GM10248 (cell line): ENCODE measurements at regions of chr11 and their contacts with region 1.

Region 1: GRCh38 chr11:124793466-124794278 is 6.5 kb downstream of the MSANTD2 start:
- DNase-seq: peak; percentile 50
- CTCF ChIP-seq: peak; percentile 77

Region 2: DNA sequence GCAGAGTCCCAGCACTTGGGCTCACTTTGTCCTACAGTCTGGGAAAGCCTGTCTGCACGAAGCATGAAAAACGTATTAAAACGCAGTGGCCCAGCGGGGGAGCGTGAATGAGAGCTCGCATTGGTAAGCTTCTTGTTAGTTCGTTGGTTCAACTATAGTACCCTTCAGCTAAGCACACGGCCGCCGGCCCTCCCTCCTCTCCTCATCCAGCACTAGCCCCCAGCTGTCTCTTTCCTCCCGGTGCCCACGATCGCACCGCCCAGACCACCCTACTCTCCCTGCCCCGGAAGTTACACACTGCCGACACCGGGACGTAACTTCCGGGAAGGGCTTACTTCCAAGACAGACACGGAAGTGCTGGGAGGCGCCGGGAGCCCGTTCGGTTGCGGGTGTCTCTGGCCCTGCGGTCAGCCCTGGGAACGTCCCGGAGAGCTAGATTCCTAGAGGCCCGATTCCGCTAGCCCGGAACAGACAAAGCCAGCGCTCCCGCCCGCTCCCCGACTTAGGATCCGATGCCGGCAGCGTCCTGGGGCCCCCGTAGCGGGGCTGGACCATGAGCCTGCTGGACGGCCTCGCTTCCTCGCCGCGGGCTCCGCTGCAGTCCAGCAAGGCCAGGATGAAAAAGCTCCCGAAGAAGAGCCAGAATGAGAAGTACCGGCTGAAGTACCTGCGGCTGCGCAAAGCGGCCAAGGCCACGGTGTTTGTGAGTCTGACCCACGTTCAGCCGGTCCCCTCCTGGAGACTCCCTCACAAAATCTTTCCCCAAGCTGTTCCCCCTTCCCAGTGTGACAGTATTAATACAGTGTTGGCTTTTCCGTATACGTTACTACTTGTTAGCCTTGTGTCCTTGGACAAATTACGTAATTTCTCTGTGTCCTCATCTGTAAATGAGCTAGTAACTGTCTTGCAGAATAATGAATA is 170.9 kb before region 1 on chr11 and contains the start of gene TBRG1:
- CTCF ChIA-PET with region 1: interaction called, 12 read pairs
- POLR2A ChIA-PET with region 1: no interaction called
- DNase-seq: peak; percentile 92
- CTCF ChIP-seq: no peak

Region 3: DNA sequence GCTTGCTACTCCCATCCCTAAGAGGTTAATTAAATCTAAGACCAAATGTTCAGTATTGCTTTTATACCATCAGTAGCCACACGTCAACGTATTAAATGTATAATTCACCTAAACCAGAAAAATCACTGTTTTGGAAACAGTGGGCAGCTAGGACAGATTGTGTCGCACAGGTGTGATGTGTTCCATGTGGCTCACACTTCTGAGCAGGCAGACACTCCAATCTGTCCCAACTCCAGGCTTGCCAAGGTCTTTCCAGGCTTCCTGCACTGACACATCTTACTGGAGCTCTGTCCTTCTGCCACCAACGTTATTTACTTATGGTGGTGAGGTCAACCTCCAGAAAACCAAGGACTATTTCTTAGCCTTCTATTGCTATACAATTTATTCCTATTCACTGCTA is 131.6 kb before region 1 on chr11:
- CTCF ChIA-PET with region 1: interaction called, 19 read pairs
- POLR2A ChIA-PET with region 1: no interaction called
- DNase-seq: no peak
- CTCF ChIP-seq: no peak

Region 4: GRCh38 chr11:124746621-124747243 is 46.9 kb before region 1 on chr11:
- CTCF ChIA-PET with region 1: interaction called, 27 read pairs
- POLR2A ChIA-PET with region 1: no interaction called
- DNase-seq: peak; percentile 92
- CTCF ChIP-seq: peak; percentile 82

Region 5: GRCh38 chr11:124778281-124778680 is 15.4 kb before region 1 on chr11:
- CTCF ChIA-PET with region 1: interaction called, 381 read pairs
- POLR2A ChIA-PET with region 1: no interaction called
- DNase-seq: no peak
- CTCF ChIP-seq: no peak

Region 6: DNA sequence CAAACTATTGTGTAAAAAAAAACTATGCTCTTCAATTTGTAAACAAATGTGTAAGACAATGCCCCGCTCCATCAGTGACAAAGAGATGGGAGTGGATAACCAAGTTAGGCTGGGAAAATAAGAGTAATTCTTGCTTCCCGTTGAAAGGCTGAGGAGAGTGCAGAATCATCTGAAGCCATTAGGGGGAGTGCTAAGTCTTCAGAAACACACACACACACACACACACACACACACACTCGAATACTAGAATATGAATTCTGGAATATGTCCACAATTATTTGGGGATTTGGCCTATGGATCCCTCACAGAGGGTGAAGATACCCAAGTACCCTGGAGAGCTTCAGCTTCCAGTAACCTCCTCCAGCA is 43.8 kb after region 1 on chr11:
- CTCF ChIA-PET with region 1: interaction called, 15 read pairs
- POLR2A ChIA-PET with region 1: no interaction called
- DNase-seq: peak; percentile 44
- CTCF ChIP-seq: peak; percentile 69

Region 7: GRCh38 chr11:124920870-124921609 is 127.4 kb after region 1 on chr11:
- CTCF ChIA-PET with region 1: no interaction called
- POLR2A ChIA-PET with region 1: no interaction called
- DNase-seq: peak; percentile 83
- CTCF ChIP-seq: no peak

Region 8: DNA sequence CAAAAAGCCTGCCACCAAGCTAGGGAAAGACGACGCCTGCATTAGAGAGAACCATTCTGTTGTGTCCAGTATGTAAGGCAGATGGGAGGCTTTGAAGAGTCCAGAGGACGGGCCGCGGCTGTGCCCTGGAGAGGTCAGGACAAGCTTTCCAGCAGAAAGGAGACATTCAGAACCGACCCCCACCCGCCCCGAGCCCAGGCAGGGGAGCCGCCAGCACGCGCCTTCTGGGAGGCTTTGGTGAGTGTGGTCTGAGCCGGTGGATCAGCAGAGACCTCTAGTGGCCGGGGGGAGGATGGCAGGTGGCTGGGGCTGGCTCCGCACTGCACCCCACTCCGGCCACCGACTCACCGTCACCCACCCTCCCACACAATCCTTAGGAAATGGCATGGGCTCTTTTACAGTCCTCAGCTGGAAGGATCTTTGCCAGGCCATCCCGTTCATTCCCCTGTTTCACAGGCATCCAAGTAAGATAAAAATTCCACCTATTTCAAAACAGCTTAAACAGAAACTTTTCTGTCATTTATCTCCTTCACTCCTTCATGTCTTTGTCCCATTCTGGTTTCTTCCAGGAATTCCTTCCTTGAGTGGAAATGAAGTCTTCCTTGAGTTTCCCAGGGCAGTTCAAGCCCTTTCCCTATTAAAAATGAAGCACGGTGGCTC is 611.2 kb after region 1 on chr11:
- CTCF ChIA-PET with region 1: no interaction called
- POLR2A ChIA-PET with region 1: no interaction called
- DNase-seq: peak; percentile 86
- CTCF ChIP-seq: peak; percentile 97